Naive thymus-derived CD8-positive, alpha-beta T cell (primary cell): ENCODE measurements at regions of chr1 and their contacts with region 1.

Region 1: GRCh38 chr1:84573967-84574842 is at the start of gene CTBS:
- DNase-seq: peak; percentile 71 to 92 (median 84)
- ATAC-seq: peak; percentile 89 to 90
- H3K4me3 Mint-ChIP-seq: peak within 1 kb of the TSS; percentile 95 to 99 (median 98)
- H3K27ac Mint-ChIP-seq: peak within 1 kb of the TSS; percentile 98 to 100 (median 100)
- H3K4me1 Mint-ChIP-seq: peaks cover 33 to 50% (median 40%) of the 10 kb centered on the region in 4 donors
- H3K27me3 Mint-ChIP-seq: no peaks in the 10 kb centered on the region
- polyA plus RNA-seq, gene CTBS: 16.3 to 21.1 (median 18.2) TPM

Region 2: DNA sequence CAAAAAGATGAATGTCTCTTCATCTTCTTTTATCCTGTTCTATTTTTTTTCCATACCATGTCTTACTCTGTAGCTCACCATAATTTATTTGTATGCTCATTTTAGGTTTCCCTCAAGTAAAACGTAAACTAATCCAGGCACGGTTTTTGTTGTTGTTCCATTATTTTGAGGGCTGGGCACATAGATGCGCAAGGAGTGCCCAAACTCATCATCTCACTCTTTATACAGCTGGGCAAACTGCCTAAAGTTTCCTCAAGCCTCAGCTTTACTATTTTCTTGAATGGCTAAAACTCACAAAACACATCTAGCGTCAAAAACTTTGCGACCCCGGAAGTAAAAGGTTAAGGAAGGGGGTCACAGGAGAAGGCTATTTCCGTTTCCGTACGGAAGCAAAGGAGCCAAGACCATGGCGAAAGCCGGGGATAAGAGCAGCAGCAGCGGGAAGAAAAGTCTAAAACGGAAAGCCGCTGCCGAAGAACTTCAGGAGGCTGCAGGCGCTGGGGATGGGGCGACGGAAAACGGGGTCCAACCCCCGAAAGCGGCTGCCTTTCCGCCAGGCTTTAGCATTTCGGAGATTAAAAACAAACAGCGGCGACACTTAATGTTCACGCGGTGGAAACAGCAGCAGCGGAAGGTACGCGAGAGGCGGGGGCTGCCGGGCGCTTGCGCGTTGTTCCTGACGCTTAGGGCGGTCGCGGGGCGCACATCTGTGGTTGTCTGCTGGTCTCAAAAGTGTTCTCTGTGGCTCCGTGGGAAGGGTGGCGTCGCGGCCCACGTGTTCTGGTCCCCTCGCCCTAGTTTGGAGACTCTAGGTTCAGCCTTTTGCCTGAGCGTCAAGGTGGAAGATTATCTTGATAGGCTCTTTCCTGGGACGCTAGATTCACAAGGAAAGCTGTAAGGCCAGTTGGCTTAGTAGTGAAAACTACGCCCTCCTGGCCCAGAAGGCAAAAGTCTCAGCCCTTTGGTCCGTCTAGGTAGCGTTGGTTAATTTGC is 95.0 kb before region 1 on chr1 and contains the start of gene RPF1:
- POLR2A ChIA-PET with region 1: interaction called, 16 read pairs
- DNase-seq: peak; percentile 67 to 92 (median 82)
- ATAC-seq: peak; percentile 96 to 97
- H3K4me3 Mint-ChIP-seq: peak within 1 kb of the TSS; percentile 96 to 100 (median 99)
- H3K27ac Mint-ChIP-seq: peak within 1 kb of the TSS; percentile 91 to 100 (median 99)
- H3K4me1 Mint-ChIP-seq: peaks cover 18 to 50% (median 46%) of the 10 kb centered on the region in 4 donors
- H3K27me3 Mint-ChIP-seq: peaks cover 18 to 34% (median 24%) of the 10 kb centered on the region in 5 donors
- polyA plus RNA-seq, gene RPF1: 55.2 to 64.2 (median 58.4) TPM

Region 3: GRCh38 chr1:84611796-84612195 is 37.6 kb after region 1 on chr1:
- POLR2A ChIA-PET with region 1: interaction called, 41 read pairs
- DNase-seq: peak in 7 of 10 donors; percentile 12 to 67 (median 45)
- ATAC-seq: peak; percentile 96
- H3K4me3 Mint-ChIP-seq: peak overlapping the region; percentile 49 to 85 (median 66)
- H3K27ac Mint-ChIP-seq: peak overlapping the region; percentile 88 to 97 (median 96)
- H3K4me1 Mint-ChIP-seq: peaks cover 18 to 33% (median 22%) of the 10 kb centered on the region in 4 donors
- H3K27me3 Mint-ChIP-seq: peaks cover 0 to 5% (median 0%) of the 10 kb centered on the region in 5 donors